ENCODE measurements at regions of chr16 and their contacts with region 1.

Region 1: GRCh38 chr16:74738134-74738541 is 36.5 kb downstream of the FA2H start:
- DNase-seq: no peak

Region 2: DNA sequence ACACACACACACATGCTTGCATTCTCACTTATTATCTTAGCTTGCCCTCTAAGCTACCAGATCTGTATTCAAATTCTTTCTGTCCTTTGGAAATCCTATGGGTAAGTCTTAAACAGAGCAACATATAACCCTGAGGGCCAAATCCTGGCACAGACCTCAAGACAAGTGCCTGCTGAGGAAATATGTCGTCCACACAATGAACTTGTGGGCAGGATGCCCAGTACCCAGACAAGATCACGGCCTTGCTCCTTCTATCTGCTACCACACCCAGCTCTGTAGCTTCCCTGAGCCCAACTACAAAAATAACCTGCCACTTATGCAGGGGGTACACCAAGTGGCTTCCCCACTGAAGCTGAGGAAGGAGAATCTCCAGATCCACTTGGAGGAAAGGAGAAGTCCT is 73.8 kb after region 1 on chr16:
- intact Hi-C with region 1: loop called in 1 of 2 experiments (anchors 1 kb)
- DNase-seq: no peak

Region 3: GRCh38 chr16:75379911-75380847 is 642.0 kb after region 1 on chr16:
- intact Hi-C with region 1: no loop called
- DNase-seq: no peak

Region 4: DNA sequence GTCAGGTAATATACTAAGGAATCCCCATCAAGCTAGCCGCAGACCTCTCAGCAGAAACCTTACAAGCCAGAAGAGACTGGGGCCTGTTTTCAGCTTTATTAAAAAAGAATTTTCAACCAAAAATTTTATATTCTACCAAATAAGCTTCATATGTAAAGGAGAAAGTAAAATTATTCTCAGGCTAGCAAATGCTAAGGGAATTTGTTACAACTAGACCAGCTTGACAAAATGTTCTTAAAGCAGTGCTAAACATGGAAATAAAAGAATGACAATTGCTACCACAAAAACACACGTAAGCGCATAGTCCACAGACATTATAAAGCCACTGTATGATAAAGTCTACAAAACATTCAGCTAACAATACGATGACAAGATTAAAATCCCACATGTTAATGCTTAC is 2003.5 kb after region 1 on chr16:
- intact Hi-C with region 1: no loop called
- DNase-seq: no peak

Measured in posterior vena cava (tissue), 2 donors.